HepG2 (cell line): ENCODE measurements at regions of chr9 and their contacts with region 1.

Region 1: GRCh38 chr9:87569518-87569917 is 71.9 kb downstream of the DAPK1 start:
- DNase-seq: peak; percentile 63
- ATAC-seq: peak; percentile 61
- H3K4me3 ChIP-seq: peak overlapping the region; percentile 19 to 51 (median 47)
- H3K27ac ChIP-seq: peak overlapping the region; percentile 98
- H3K4me1 ChIP-seq: peaks cover 71% of the 10 kb centered on the region
- H3K27me3 ChIP-seq: no peaks in the 10 kb centered on the region
- CTCF ChIP-seq: no peak
- EP300 ChIP-seq: no peak
- POLR2A ChIP-seq: 0 out of 4 replicates have a peak, but pooled peaks of 1 of the 2 experiments have one; percentile 7
- RAD21 ChIP-seq: no peak

Region 2: GRCh38 chr9:87395804-87396479 is 173.6 kb before region 1 on chr9:
- CTCF ChIA-PET with region 1: no interaction called
- POLR2A ChIA-PET with region 1: no interaction called
- in situ Hi-C with region 1: no loop called
- intact Hi-C with region 1: loop called (anchors 1 kb)
- DNase-seq: peak; percentile 91
- ATAC-seq: peak; percentile 99
- H3K4me3 ChIP-seq: peak overlapping the region in 1 of 3 experiments; percentile 0; a peak in 2 of 6 replicates
- H3K27ac ChIP-seq: no peak overlapping the region
- H3K4me1 ChIP-seq: peaks cover 23% of the 10 kb centered on the region
- H3K27me3 ChIP-seq: peaks cover 0 to 9% of the 10 kb centered on the region in 2 experiments; a peak in 3 of 5 replicates
- CTCF ChIP-seq: peak; percentile 19; the same call in 1 of the 2 replicates
- EP300 ChIP-seq: peak in 1 of 2 experiments; percentile 64; a peak in 2 of 4 replicates
- POLR2A ChIP-seq: no peak
- RAD21 ChIP-seq: no peak

Region 3: DNA sequence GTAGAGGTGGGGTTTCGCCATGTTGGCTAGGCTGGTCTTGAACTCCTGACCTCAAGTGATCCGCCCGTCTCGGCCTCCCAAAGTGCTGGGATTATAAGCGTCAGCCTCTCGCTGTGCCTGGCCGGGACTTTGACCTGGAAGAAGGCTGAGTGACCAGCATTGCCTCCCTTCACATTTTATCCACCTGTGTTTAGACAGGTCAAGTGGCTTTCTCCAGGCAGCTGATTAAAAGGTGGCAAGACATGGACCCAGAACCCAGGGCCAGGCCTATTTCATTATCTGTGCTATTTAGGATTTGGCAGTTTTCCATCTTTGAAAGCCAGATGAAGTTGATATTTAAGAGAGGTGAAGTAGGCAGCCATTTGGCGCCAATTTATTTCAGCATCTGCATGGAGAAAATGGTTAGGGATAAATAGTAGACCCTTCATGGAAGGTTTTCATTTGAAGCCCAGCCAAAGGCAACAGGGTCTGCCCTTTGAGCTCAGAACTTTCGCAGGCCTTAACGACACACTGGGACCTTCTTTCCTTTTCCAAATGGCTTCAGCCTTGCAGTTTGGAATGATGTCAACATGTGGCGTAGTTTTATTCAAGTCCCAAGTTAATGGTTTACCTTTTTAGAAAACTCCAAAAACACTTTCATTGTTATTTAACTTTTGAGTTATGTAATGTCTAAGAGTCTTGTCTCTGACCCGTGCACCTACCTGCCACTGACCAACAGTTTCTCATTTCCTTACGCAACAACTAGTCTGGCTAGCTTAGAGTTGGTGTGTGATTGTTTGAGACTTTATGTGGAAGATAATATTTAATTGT is 63.4 kb before region 1 on chr9:
- CTCF ChIA-PET with region 1: no interaction called
- POLR2A ChIA-PET with region 1: interaction called, 19 read pairs
- in situ Hi-C with region 1: no loop called
- intact Hi-C with region 1: loop called (anchors 2 kb)
- DNase-seq: peak; percentile 96
- ATAC-seq: peak; percentile 81
- H3K4me3 ChIP-seq: no peak overlapping the region
- H3K27ac ChIP-seq: peak overlapping the region; percentile 72
- H3K4me1 ChIP-seq: peaks cover 62% of the 10 kb centered on the region
- H3K27me3 ChIP-seq: no peaks in the 10 kb centered on the region
- CTCF ChIP-seq: peak; percentile 41
- EP300 ChIP-seq: peak in 1 of 2 experiments; percentile 74; a peak in 2 of 4 replicates
- POLR2A ChIP-seq: no peak
- RAD21 ChIP-seq: no peak

Region 4: GRCh38 chr9:87581513-87581912 is 12.0 kb after region 1 on chr9:
- CTCF ChIA-PET with region 1: no interaction called
- POLR2A ChIA-PET with region 1: interaction called, 26 read pairs
- in situ Hi-C with region 1: no loop called
- intact Hi-C with region 1: no loop called
- DNase-seq: no peak
- ATAC-seq: no peak
- H3K4me3 ChIP-seq: no peak overlapping the region
- H3K27ac ChIP-seq: peak overlapping the region; percentile 24
- H3K4me1 ChIP-seq: peaks cover 71% of the 10 kb centered on the region
- H3K27me3 ChIP-seq: no peaks in the 10 kb centered on the region
- CTCF ChIP-seq: no peak
- EP300 ChIP-seq: no peak
- POLR2A ChIP-seq: no peak
- RAD21 ChIP-seq: no peak

Region 5: DNA sequence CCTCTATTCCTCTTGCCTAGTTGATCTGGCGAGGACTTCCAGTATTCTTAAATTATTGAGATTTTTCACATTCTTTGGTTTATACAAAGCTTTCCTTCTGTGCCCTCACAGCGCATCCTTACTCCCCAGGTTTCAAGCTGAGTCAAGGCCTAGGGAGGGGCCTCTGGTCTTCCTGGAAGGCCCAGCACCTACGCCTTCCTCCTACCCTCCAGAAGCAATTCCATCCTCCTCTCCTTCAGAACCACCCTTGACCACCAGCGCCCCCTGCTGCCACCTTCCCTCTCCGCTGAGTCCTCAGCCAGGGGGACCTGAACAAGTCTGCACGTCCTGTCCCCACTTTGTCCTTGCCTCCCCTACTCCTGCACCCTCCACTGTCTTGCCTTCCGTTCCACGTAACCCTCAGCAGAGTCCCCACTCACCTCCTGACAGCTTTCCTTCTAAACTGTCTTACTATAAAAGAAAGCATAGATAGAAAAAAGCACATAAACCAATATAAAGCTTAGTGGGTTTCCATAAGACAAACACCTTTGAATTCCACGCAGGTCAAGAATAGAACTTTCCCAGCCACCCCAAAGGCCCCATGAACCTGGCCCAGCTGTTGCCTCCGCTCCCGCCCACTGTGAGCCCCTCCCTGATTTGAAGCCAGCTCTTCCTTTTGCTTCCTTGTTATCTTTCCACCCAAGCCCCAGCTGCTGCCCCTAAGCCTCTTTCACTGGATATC is 93.5 kb after region 1 on chr9:
- CTCF ChIA-PET with region 1: no interaction called
- POLR2A ChIA-PET with region 1: no interaction called
- in situ Hi-C with region 1: no loop called
- intact Hi-C with region 1: loop called (anchors 1 kb)
- DNase-seq: peak; percentile 41
- ATAC-seq: peak; percentile 88
- H3K4me3 ChIP-seq: no peak overlapping the region
- H3K27ac ChIP-seq: no peak overlapping the region
- H3K4me1 ChIP-seq: no peaks in the 10 kb centered on the region
- H3K27me3 ChIP-seq: no peaks in the 10 kb centered on the region
- CTCF ChIP-seq: peak; percentile 95
- EP300 ChIP-seq: no peak
- POLR2A ChIP-seq: no peak
- RAD21 ChIP-seq: peak; percentile 86